ENCODE measurements at regions of chr6 and their contacts with region 1.

Region 1: DNA sequence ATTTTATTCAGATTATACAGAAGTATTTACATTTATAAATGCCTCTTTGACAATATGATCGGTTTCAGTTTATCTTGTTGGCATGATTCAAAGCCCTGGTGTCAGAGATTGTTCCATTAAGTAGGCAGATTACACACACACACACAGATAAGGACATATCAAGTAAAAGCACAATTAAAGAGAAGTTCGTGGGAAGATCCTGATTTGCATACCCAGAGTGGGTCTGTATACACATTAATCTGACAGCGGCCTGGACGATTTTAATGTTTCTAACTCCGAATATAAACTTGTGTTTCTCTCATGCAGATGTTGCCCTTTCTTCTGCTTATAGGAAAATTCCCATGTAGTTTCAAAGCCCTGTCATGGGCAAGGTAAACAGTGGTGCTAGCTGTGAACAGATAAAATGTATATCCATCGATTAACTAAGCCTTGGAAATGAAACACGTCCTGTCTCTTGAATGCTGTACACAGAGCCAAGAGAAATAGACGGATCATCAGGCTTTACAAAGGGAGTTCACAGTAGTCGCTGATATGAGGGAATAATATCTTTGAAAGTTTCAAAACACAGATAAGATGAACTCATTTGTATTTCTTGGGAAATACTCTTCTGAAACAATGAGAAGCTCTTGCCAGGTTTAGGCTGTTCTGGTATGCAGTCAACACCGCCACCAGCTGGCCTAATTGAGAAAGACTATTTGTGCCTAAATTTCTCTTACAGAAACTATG is 108.2 kb upstream of the GMDS start:
- DNase-seq: peak; percentile 23 to 69
- ATAC-seq: peak; percentile 59 to 81 (median 78)
- H3K4me3 ChIP-seq: no peak overlapping the region
- H3K27ac ChIP-seq: no peak overlapping the region
- H3K4me1 ChIP-seq: peaks cover 0 to 12% (median 0%) of the 10 kb centered on the region in 9 donors
- H3K27me3 ChIP-seq: no peaks in the 10 kb centered on the region
- CTCF ChIP-seq: peak; percentile 63 to 88 (median 81)

Region 2: DNA sequence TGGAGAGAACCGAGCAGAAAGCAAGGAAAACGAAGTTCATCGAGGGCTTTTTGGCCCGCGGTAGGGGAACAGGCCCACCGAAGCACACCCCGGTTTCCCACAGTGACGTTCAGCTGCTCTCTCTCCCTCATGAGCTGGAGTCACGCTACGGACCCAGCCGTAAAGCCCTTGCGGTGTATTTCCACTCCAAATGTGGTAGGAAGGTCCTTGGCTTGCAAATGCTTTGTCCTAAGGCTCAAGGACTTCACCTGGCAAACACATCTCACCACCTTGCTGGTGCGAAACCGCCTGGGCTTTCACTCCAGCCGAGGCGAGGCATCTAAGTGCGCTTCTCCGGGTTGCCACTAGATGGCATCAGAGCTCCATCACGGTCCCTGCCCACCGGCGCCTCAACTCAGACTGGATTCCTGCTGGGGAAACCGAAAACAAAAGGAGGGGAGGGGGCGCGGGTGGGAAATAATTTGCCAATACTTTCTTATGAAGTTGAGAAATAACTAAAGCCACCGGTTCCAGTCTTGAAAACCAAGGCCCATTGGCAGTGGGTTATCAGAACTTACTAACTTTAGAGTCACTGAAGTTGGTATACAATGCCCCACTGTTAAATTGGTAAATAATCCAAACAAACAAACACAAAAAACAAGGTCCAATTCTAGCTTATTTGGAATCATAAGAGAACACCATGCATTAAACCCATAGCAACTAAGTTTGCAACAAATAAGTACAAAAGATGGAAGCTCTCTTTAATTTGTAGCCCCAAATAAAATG is 757.3 kb before region 1 on chr6:
- intact Hi-C with region 1: loop called in 7 of 10 experiments (anchors 1 to 5 kb)
- DNase-seq: peak; percentile 58 to 61
- ATAC-seq: peak; percentile 73 to 90 (median 82)
- H3K4me3 ChIP-seq: peak overlapping the region in 9 of 10 donors; percentile 7 to 47 (median 33)
- H3K27ac ChIP-seq: no peak overlapping the region
- H3K4me1 ChIP-seq: peaks cover 0 to 11% (median 7%) of the 10 kb centered on the region in 9 donors
- H3K27me3 ChIP-seq: peaks cover 4 to 81% (median 52%) of the 10 kb centered on the region in 7 donors
- CTCF ChIP-seq: peak; percentile 86 to 98 (median 94)

Region 3: GRCh38 chr6:2103644-2104523 is 249.7 kb before region 1 on chr6:
- intact Hi-C with region 1: loop called in 4 of 10 experiments (anchors 5 to 10 kb)
- DNase-seq: no peak
- ATAC-seq: peak in 7 of 8 donors; percentile 75 to 83 (median 79)
- H3K4me3 ChIP-seq: peak overlapping the region in 4 of 10 donors; percentile 5 to 26 (median 14)
- H3K27ac ChIP-seq: peak overlapping the region in 2 of 10 donors; percentile 17 to 24
- H3K4me1 ChIP-seq: peaks cover 0 to 10% (median 0%) of the 10 kb centered on the region in 9 donors
- H3K27me3 ChIP-seq: no peaks in the 10 kb centered on the region
- CTCF ChIP-seq: peak in 8 of 9 donors; percentile 30 to 77 (median 65)

Region 4: DNA sequence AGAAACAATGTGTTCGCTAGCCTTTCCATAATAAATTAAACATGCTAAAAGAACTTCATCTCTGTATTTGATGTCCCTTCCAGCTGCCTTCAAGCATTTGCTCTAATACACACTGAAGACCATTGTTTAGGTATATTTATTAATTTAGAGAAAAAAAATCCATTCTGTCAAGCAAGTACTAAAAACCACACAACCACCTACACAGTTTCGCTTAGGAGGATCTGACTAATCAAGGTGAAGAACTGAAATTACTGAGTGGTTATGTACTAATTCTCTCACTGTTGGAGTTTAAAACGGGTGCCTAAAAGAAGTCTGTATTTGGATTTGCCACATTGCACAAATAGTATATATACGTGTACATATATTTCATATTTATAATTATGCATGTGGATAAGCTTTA is 167.1 kb before region 1 on chr6:
- intact Hi-C with region 1: no loop called
- DNase-seq: no peak
- ATAC-seq: no peak
- H3K4me3 ChIP-seq: no peak overlapping the region
- H3K27ac ChIP-seq: no peak overlapping the region
- H3K4me1 ChIP-seq: no peaks in the 10 kb centered on the region
- H3K27me3 ChIP-seq: no peaks in the 10 kb centered on the region
- CTCF ChIP-seq: no peak

Region 5: DNA sequence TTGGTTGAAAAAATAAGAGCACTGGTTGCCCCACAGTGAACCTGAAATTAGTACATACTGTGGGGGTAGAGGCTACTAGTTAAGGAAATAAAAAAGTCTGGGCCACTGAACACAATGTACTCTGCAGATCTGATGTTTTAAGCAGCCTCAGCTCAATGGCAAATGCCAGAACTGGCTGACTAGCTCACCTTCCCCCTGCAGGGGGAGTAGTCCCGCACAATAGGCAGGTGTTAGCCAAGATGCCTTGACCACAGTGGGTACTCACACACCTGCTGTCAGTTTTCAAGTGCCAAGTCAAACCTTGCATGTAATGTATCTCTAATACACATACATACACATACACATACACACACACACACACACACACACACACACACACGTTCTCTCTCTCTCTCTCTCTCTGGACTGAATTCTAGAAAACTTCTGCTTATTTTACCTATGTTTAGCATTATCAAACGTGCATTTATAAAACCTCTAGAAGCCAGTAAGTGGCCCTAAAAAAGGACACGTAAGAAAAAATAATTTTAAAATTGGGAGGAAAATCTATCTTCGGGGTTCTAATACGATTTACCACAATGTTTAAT is 144.3 kb before region 1 on chr6:
- intact Hi-C with region 1: loop called in 3 of 10 experiments (anchors 2 to 10 kb)
- DNase-seq: peak in 1 of 2 donors; percentile 20
- ATAC-seq: peak in 5 of 8 donors; percentile 27 to 81 (median 57)
- H3K4me3 ChIP-seq: no peak overlapping the region
- H3K27ac ChIP-seq: no peak overlapping the region
- H3K4me1 ChIP-seq: peaks cover 0 to under 1% (median 0%) of the 10 kb centered on the region in 9 donors
- H3K27me3 ChIP-seq: no peaks in the 10 kb centered on the region
- CTCF ChIP-seq: peak in 8 of 9 donors; percentile 13 to 55 (median 43)

Region 6: DNA sequence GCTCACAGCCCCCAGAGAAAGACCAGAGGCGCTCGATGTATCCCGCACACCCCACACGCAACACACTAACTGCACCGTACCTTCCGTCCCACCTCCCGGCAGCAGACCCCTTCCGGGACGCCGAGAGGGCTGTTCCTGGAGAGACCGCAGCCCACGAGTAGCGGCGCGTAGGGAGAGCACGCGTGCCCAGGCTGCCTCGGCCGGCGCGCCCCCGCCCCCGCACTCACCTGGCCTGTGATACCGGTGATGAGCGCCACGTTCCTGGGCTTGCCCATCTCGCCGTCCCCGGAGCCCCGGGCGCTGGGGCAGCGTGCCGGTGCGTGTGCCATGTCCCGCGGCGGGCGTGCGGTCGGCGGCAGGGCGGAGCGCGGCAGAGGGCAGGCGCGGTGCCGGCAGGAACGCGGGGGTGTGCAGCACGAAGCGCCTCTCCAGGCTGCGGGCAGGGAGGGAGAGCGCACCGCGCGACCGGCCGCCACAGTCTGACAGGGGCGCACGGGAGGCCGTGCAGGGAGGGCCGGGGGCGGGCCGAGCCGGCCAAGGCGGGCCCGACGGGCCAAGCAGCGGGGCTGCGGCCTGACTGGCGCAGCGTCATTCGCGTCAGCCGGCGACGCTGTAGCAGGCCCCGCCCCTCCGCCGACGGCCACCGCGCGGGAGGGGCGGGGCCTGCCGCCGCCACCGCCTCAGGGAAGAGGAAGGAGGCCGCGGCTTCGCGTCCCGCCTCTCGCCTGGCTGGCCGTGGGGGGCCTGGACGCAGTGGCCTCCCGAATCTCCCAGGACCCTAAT is 108.3 kb before region 1 on chr6 and contains the start of gene GMDS:
- intact Hi-C with region 1: loop called in 1 of 10 experiments (anchors 10 kb)
- DNase-seq: peak; percentile 86 to 89
- ATAC-seq: peak; percentile 99 to 100 (median 100)
- H3K4me3 ChIP-seq: peak within 1 kb of the TSS; percentile 63 to 98 (median 92)
- H3K27ac ChIP-seq: peak within 1 kb of the TSS; percentile 9 to 98 (median 86)
- H3K4me1 ChIP-seq: peaks cover 2 to 39% (median 19%) of the 10 kb centered on the region in 9 donors
- H3K27me3 ChIP-seq: no peaks in the 10 kb centered on the region
- CTCF ChIP-seq: peak in 1 of 9 donors; percentile 32
- total RNA-seq, gene GMDS: 5.0 to 10.6 (median 6.8) TPM

Region 7: GRCh38 chr6:2403546-2403945 is 50.0 kb after region 1 on chr6:
- intact Hi-C with region 1: no loop called
- DNase-seq: no peak
- ATAC-seq: no peak
- H3K4me3 ChIP-seq: no peak overlapping the region
- H3K27ac ChIP-seq: no peak overlapping the region
- H3K4me1 ChIP-seq: no peaks in the 10 kb centered on the region
- H3K27me3 ChIP-seq: no peaks in the 10 kb centered on the region
- CTCF ChIP-seq: no peak

Measured in heart right ventricle (tissue), 16 donors.